Colonic mucosa (tissue), 4 donors: ENCODE measurements at regions of chr6 and their contacts with region 1.

Region 1: DNA sequence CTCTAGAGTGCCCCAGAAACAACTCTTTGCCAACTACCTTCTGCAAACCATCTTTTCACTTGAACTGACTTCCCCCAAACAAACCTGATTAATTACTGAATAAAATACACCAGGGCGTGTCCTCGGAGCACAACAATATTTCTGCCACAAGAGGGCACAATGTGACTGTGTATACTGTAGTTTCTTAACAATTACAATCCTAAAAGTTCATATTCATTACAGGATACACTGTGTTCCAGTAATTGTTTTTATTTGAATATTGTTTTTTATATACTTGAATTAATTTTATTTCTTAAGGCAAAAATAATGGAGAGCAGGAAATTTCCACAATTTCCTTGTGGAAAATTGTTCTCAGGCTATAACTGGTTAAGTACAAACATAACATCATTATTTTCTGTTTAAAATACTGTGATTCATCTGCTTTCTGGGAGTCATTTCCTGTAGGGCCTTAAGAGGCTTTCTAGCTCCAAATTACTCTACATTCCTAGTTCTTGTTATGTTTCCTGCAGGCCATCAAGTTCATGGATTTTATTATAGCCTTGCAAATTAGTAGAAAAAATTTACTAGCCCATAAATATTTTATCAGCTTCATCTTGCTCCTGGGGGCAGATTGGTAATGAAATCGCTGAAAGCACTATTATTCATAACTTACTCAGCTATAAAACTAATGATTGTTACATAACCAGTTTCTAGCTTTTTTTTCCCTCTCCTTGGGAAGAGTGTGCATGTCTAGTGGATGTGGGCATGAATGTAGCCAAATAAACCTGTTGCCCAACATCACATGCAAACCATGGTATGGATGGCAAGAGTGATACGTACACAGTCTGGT is 51.9 kb upstream of the SLC22A16 start:
- DNase-seq: peak; percentile 66
- H3K4me3 ChIP-seq: no peak overlapping the region
- H3K27ac ChIP-seq: no peak overlapping the region
- H3K4me1 ChIP-seq: no peaks in the 10 kb centered on the region
- H3K27me3 ChIP-seq: no peaks in the 10 kb centered on the region
- CTCF ChIP-seq: peak; percentile 81

Region 2: DNA sequence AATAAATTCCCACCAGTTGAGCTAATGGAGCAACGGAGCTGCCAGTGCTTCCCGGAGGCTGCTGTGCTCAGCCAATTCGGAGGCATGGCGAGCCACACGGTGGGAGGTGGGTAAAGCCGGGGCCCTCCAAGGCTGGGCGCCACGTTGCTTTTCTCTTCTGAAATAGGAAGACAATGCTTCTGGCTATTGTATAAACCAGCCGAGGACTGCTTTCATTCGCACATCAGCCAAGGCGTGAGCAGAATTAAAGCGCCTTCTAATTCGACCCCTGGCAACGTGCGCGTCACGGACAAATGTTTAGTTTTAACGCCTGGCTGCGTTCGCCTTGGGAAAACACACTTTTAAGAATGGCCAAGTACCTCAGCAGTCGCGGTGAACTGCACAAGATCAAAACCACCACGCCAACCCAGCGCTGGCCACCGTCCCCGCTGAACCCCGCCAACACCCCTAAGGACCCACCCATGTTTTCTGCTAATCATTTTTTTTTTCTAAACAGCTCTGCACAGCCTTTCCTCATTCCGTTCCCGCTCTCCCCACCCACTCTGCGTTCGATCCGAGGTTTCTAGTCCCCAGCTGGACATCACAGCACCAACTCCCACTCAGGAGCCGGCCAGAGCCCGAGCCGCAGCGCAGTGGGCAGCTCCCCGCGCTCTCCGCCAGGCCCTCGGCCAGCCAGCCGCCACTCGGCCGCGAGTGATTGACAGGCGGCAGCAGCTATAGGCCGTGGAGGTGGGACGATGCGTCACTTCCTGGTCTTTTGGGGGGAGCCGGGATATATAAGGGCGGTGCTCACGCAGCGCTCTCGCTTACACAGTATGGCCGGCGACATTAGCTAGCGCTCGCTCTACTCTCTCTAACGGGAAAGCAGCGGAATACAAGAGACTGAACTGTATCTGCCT is 345.9 kb after region 1 on chr6 and contains the start of gene AMD1:
- intact Hi-C with region 1: loop called (anchors 10 kb)
- DNase-seq: peak; percentile 97
- H3K4me3 ChIP-seq: peak within 1 kb of the TSS; percentile 90
- H3K27ac ChIP-seq: peak within 1 kb of the TSS; percentile 92
- H3K4me1 ChIP-seq: peaks cover 11% of the 10 kb centered on the region
- H3K27me3 ChIP-seq: no peaks in the 10 kb centered on the region
- CTCF ChIP-seq: no peak
- total RNA-seq, gene AMD1: 70.4 to 72.7 TPM

Region 3: DNA sequence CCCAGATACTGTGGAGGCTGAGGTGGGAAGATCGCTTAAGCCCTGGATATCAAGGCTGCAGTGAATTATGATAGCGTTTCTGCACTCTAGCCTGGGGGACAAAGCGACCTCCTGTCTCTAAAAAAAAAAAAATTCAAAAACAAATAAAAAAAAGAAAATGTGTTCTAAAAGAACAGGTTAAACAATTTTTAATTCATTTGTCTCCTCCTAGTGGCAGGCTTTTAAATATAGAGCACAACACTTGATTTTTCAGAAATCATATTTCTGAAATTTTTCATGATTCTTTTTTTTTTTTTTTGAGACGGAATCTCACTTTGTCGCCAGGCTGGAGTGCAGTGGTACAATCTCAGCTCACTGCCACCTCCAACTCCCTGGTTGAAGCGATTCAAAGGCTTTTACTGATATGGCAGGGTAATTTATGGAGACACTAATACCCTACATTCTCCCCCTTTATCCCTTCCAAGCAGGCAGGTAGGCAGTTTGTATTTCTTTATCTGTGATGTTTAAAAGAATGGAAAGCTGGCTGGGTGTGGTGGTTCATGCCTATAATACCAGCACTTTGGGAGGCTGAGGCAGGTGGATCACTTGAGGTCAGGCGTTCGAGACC is 421.5 kb after region 1 on chr6:
- intact Hi-C with region 1: loop called (anchors 2 kb)
- DNase-seq: no peak
- H3K4me3 ChIP-seq: no peak overlapping the region
- H3K27ac ChIP-seq: no peak overlapping the region
- H3K4me1 ChIP-seq: no peaks in the 10 kb centered on the region
- H3K27me3 ChIP-seq: no peaks in the 10 kb centered on the region
- CTCF ChIP-seq: peak; percentile 39

Region 4: GRCh38 chr6:110999634-111000270 is 471.4 kb after region 1 on chr6:
- intact Hi-C with region 1: loop called (anchors 5 kb)
- DNase-seq: no peak
- H3K4me3 ChIP-seq: no peak overlapping the region
- H3K27ac ChIP-seq: no peak overlapping the region
- H3K4me1 ChIP-seq: no peaks in the 10 kb centered on the region
- H3K27me3 ChIP-seq: no peaks in the 10 kb centered on the region
- CTCF ChIP-seq: peak; percentile 34